ENCODE measurements at regions of chr10 and their contacts with region 1.

Region 1: GRCh38 chr10:74826142-74827044 is at the start of gene KAT6B:
- DNase-seq: peak; percentile 100
- ATAC-seq: peak; percentile 90
- H3K4me3 ChIP-seq: peak within 1 kb of the TSS; percentile 93
- H3K27ac ChIP-seq: peak within 1 kb of the TSS; percentile 91
- H3K4me1 ChIP-seq: peaks cover 9% of the 10 kb centered on the region; the same call in 1 of the 2 replicates
- H3K27me3 ChIP-seq: no peaks in the 10 kb centered on the region
- CTCF ChIP-seq: peak; percentile 11 to 41 (median 17); a peak in 3 of 6 replicates
- EP300 ChIP-seq: 0 out of 4 replicates have a peak, but pooled peaks of 1 of the 2 experiments have one; percentile 34
- POLR2A ChIP-seq: peak; percentile 87
- RAD21 ChIP-seq: no peak; the same call in 1 of the 2 replicates
- polyA plus RNA-seq, gene KAT6B: 2.7 to 5.3 TPM

Region 2: DNA sequence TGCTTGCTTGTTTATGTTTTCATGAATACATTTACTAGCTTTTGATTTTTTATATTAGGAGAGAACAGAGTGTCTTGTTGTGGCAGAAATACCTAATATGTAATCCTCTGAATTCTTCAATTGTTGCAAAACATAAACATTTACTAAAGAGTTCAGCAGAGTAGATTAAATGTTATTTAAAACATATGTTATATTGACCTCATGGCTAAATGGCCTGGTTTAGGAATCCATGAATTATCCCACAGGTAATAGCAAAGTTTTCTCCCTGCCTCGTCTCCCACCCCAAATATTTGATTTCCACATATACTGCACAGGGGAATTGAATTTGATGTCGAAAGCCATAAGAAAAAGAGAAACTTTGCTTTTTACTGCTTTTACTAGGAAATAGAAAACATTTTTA is 563.5 kb before region 1 on chr10:
- CTCF ChIA-PET with region 1: no interaction called
- POLR2A ChIA-PET with region 1: no interaction called
- RAD21 ChIA-PET with region 1: no interaction called
- SMC1A ChIA-PET with region 1: no interaction called
- in situ Hi-C with region 1: no loop called
- intact Hi-C with region 1: loop called (anchors 2 kb)
- DNase-seq: no peak
- ATAC-seq: no peak
- H3K4me3 ChIP-seq: no peak overlapping the region
- H3K27ac ChIP-seq: no peak overlapping the region
- H3K4me1 ChIP-seq: no peaks in the 10 kb centered on the region
- H3K27me3 ChIP-seq: no peaks in the 10 kb centered on the region
- CTCF ChIP-seq: no peak
- EP300 ChIP-seq: no peak
- POLR2A ChIP-seq: no peak
- RAD21 ChIP-seq: no peak

Region 3: DNA sequence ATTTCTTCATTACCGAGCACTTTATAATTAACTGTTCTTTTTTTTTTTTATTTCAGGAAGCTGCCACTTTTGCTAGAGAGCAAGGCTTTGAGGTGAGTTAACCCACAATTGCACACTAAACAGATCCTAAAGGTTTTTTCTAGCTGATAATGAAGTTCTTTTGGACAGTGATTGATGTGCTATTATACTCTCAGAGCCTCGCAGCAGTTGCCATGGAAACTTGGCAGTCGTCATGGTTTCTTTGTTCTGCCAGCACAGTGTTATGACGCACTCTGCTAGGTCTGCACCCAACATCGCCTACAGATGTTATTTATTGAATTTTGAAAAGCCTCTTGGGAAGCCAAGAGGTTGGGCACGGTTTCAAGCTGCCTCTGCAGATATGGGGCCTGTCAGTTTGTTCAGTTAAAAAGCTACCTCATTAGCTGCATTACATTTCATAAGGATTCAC is 237.1 kb before region 1 on chr10:
- CTCF ChIA-PET with region 1: no interaction called
- POLR2A ChIA-PET with region 1: interaction called, 4 read pairs
- RAD21 ChIA-PET with region 1: interaction called, 6 read pairs
- SMC1A ChIA-PET with region 1: interaction called, 3 read pairs
- in situ Hi-C with region 1: no loop called
- intact Hi-C with region 1: loop called (anchors 2 kb)
- DNase-seq: peak; percentile 82
- ATAC-seq: peak; percentile 75
- H3K4me3 ChIP-seq: no peak overlapping the region
- H3K27ac ChIP-seq: no peak overlapping the region
- H3K4me1 ChIP-seq: peaks cover 23% of the 10 kb centered on the region
- H3K27me3 ChIP-seq: no peaks in the 10 kb centered on the region
- CTCF ChIP-seq: no peak
- EP300 ChIP-seq: peak; percentile 80 to 92
- POLR2A ChIP-seq: no peak
- RAD21 ChIP-seq: no peak

Region 4: DNA sequence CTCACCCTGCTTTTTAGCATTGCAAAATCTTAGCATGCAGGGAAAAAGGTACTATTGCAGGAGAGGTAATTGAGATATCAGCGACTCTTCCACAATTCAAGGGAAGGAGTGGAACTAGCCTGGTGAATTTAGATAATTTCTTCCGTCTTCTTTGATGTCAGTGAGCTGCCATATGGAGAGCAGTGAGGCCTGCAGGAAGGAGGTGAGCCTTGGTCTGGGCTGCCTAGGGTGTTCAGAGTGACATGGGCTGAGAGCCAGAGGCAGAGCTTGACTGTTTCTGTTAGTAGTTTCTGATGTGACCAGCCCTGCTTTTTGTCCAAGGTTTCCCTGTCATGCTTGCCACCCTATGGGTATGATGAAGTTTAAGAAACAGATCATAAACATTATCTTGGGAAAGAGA is 28.6 kb after region 1 on chr10:
- CTCF ChIA-PET with region 1: interaction called, 3 read pairs
- POLR2A ChIA-PET with region 1: interaction called, 13 read pairs
- RAD21 ChIA-PET with region 1: interaction called, 18 read pairs
- SMC1A ChIA-PET with region 1: interaction called, 34 read pairs
- in situ Hi-C with region 1: no loop called
- intact Hi-C with region 1: no loop called
- DNase-seq: no peak
- ATAC-seq: peak; percentile 83
- H3K4me3 ChIP-seq: peak overlapping the region; percentile 22; the same call in 1 of the 2 replicates
- H3K27ac ChIP-seq: peak overlapping the region; percentile 82
- H3K4me1 ChIP-seq: peaks cover 19% of the 10 kb centered on the region
- H3K27me3 ChIP-seq: no peaks in the 10 kb centered on the region
- CTCF ChIP-seq: no peak
- EP300 ChIP-seq: no peak
- POLR2A ChIP-seq: 0 out of 2 replicates have a peak, but pooled peaks have one; percentile 20
- RAD21 ChIP-seq: no peak

Region 5: GRCh38 chr10:74932648-74933047 is 106.3 kb after region 1 on chr10:
- CTCF ChIA-PET with region 1: no interaction called
- POLR2A ChIA-PET with region 1: no interaction called
- RAD21 ChIA-PET with region 1: no interaction called
- SMC1A ChIA-PET with region 1: no interaction called
- in situ Hi-C with region 1: no loop called
- intact Hi-C with region 1: no loop called
- DNase-seq: no peak
- ATAC-seq: no peak
- H3K4me3 ChIP-seq: no peak overlapping the region
- H3K27ac ChIP-seq: no peak overlapping the region
- H3K4me1 ChIP-seq: no peaks in the 10 kb centered on the region
- H3K27me3 ChIP-seq: no peaks in the 10 kb centered on the region
- CTCF ChIP-seq: no peak
- EP300 ChIP-seq: no peak
- POLR2A ChIP-seq: no peak
- RAD21 ChIP-seq: no peak

Region 6: DNA sequence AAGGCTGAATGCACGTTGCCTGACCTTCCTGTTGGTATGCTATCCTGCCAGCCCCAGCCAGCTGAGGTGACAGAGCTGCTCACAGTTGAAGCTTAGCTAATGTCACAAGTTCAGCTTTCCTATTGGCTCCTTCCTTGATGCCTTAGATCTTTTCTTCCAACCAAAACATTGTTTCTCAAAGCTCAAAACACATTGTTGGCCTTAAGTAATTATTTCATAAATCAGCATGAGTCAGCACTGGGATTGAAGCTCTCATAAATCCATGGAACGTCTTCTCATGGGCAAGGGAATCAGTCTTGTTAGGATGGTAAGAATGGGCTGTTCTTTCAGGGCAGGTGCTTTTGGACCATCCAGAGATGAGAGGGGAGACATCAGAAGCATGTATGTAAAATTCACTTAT is 157.0 kb after region 1 on chr10:
- CTCF ChIA-PET with region 1: interaction called, 8 read pairs
- POLR2A ChIA-PET with region 1: interaction called, 3 read pairs
- RAD21 ChIA-PET with region 1: interaction called, 23 read pairs
- SMC1A ChIA-PET with region 1: interaction called, 11 read pairs
- in situ Hi-C with region 1: no loop called
- intact Hi-C with region 1: no loop called
- DNase-seq: no peak
- ATAC-seq: peak; percentile 21; the same call in 1 of the 3 replicates
- H3K4me3 ChIP-seq: no peak overlapping the region
- H3K27ac ChIP-seq: peak overlapping the region; percentile 66
- H3K4me1 ChIP-seq: peaks cover 22% of the 10 kb centered on the region
- H3K27me3 ChIP-seq: no peaks in the 10 kb centered on the region
- CTCF ChIP-seq: no peak
- EP300 ChIP-seq: no peak
- POLR2A ChIP-seq: no peak
- RAD21 ChIP-seq: no peak

Measured in GM12878 (cell line).